AG04450 (cell line): ENCODE measurements at regions of chr2 and their contacts with region 1.

Region 1: GRCh38 chr2:33426666-33427231 is 49.7 kb upstream of the RASGRP3 start:
- DNase-seq: peak; percentile 46
- H3K4me3 ChIP-seq: no peak overlapping the region
- H3K27ac ChIP-seq: peak overlapping the region; percentile 47
- H3K27me3 ChIP-seq: no peaks in the 10 kb centered on the region
- CTCF ChIP-seq: no peak

Region 2: DNA sequence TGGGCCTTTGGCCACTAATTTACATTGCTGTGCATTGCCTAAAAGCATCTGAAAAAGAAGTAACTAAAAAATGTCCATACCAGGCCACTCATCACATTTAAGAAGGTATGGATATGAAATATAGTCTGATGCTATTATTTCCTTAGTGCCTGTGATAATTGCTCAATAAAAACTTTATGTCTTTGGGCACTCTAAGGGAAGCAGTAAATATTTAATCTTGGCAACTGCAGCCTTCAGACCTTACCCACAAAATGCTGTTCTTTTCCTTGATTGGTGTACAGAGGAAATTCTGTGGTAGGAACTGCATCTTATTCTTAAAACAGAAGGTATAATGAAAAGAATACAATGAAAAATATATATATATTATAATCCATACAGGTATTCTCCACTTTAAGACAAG is 76.1 kb before region 1 on chr2:
- CTCF ChIA-PET with region 1: no interaction called
- POLR2A ChIA-PET with region 1: no interaction called
- DNase-seq: no peak
- H3K4me3 ChIP-seq: no peak overlapping the region
- H3K27ac ChIP-seq: no peak overlapping the region
- H3K27me3 ChIP-seq: no peaks in the 10 kb centered on the region
- CTCF ChIP-seq: no peak

Region 3: GRCh38 chr2:33412920-33413319 is 13.8 kb before region 1 on chr2:
- CTCF ChIA-PET with region 1: interaction called, 5 read pairs
- POLR2A ChIA-PET with region 1: interaction called, 11 read pairs
- DNase-seq: no peak
- H3K4me3 ChIP-seq: no peak overlapping the region
- H3K27ac ChIP-seq: no peak overlapping the region
- H3K27me3 ChIP-seq: no peaks in the 10 kb centered on the region
- CTCF ChIP-seq: peak; percentile 65

Region 4: GRCh38 chr2:33599175-33599942 is 172.6 kb after region 1 on chr2 and contains the start of gene FAM98A:
- CTCF ChIA-PET with region 1: no interaction called
- POLR2A ChIA-PET with region 1: no interaction called
- DNase-seq: peak; percentile 99
- H3K4me3 ChIP-seq: peak within 1 kb of the TSS; percentile 100
- H3K27ac ChIP-seq: peak within 1 kb of the TSS; percentile 79
- H3K27me3 ChIP-seq: no peaks in the 10 kb centered on the region
- CTCF ChIP-seq: peak; percentile 36; the same call in 1 of the 2 replicates
- polyA plus RNA-seq, gene FAM98A: 145 and 156 TPM in 2 replicates